AG04449 (cell line): ENCODE measurements at regions of chr11 and their contacts with region 1.

Region 1: GRCh38 chr11:34585735-34586487 is 35.0 kb upstream of the EHF start:
- DNase-seq: no peak
- H3K4me3 ChIP-seq: no peak overlapping the region
- CTCF ChIP-seq: peak; percentile 19

Region 2: GRCh38 chr11:34602245-34602644 is 16.3 kb after region 1 on chr11:
- CTCF ChIA-PET with region 1: interaction called, 48 read pairs
- POLR2A ChIA-PET with region 1: no interaction called
- DNase-seq: no peak
- H3K4me3 ChIP-seq: no peak overlapping the region
- CTCF ChIP-seq: no peak

Region 3: DNA sequence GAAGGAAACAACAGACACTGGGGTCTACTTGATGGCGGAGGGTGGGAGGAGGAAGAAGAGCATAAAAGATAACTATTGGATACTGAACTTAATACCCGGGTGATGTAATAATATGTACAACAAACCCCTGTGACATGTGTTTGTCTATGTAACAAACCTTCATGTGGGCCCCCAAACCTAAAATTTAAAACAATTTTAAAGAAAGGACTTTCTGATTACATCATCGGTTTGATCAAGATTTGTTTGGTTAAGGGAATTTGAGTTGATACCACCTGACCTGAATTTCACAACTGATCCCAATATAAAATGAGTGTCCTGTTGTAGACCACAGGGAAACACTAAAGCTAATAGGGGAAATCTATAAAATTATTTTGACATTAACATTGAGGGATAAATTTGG is 296.0 kb after region 1 on chr11:
- CTCF ChIA-PET with region 1: interaction called, 360 read pairs
- POLR2A ChIA-PET with region 1: no interaction called
- DNase-seq: no peak
- H3K4me3 ChIP-seq: no peak overlapping the region
- CTCF ChIP-seq: no peak

Region 4: GRCh38 chr11:34899633-34900016 is 313.7 kb after region 1 on chr11:
- CTCF ChIA-PET with region 1: interaction called, 58 read pairs
- POLR2A ChIA-PET with region 1: no interaction called
- DNase-seq: no peak
- H3K4me3 ChIP-seq: no peak overlapping the region
- CTCF ChIP-seq: no peak